Activated CD4-positive, alpha-beta T cell treated with anti-CD3 and anti-CD28 coated beads, Interleukin-2, amount 10 ng/mL, durations not matched to agents 24 days and 14 days (primary cell): ENCODE measurements at regions of chr4 and their contacts with region 1.

Region 1: DNA sequence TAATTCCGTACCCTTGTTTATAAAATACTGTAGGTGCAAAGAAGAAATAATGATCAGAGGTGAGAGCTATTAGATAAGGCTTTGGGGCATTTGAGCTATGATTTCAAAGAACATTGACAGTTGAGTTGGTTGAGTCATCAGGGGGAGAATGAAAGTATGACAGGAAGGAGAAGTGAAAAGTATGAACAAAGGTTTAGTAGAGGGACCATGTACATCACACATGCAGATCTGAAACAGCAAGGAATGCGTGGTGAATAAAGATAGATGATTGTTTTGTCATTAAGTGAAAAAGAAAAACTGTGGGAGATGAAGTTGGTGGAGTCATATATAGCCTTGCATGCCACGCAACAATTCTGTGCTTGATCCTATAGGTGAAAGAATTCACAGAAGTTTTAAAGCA is 163.1 kb downstream of the ARAP2 start:
- DNase-seq: no peak
- H3K4me3 Mint-ChIP-seq: no peak overlapping the region
- H3K27ac Mint-ChIP-seq: no peak overlapping the region
- H3K4me1 Mint-ChIP-seq: peaks cover 4% of the 10 kb centered on the region
- H3K27me3 Mint-ChIP-seq: no peaks in the 10 kb centered on the region

Region 2: GRCh38 chr4:35975617-35976355 is 105.4 kb before region 1 on chr4:
- intact Hi-C with region 1: loop called (anchors 1 kb)
- DNase-seq: no peak
- H3K4me3 Mint-ChIP-seq: no peak overlapping the region
- H3K27ac Mint-ChIP-seq: no peak overlapping the region
- H3K4me1 Mint-ChIP-seq: peaks cover 12% of the 10 kb centered on the region
- H3K27me3 Mint-ChIP-seq: no peaks in the 10 kb centered on the region

Region 3: DNA sequence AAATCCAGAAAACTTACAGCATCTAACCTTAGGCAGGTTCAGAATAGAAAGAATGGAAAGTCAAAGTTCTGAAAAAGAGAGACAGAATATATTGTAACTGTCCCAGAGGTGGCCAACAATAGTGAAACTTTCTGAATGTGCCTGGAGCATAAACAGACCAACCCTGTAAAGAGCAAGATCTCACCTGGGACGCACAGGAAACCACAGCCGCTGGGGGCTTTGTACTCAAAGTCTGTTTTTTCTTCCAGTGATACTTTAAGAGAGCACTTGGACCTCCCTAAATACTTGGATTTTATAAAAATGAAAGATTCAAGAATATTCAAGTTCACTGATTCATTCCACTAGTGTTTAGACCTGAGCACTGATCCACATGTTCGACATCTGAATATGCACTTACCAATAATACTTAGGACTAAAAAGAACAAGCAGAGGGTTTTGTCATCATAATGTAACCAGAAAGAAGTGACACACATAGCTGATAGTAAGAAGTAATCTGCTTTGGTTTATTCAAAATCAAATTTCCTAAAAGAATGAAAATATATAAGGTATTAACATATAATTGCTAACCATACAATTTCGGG is 127.8 kb after region 1 on chr4:
- intact Hi-C with region 1: loop called (anchors 2 kb)
- DNase-seq: peak; percentile 72
- H3K4me3 Mint-ChIP-seq: peak overlapping the region; percentile 57
- H3K27ac Mint-ChIP-seq: peak overlapping the region; percentile 78
- H3K4me1 Mint-ChIP-seq: peaks cover 39% of the 10 kb centered on the region
- H3K27me3 Mint-ChIP-seq: no peaks in the 10 kb centered on the region

Region 4: GRCh38 chr4:36322921-36323354 is 241.8 kb after region 1 on chr4:
- intact Hi-C with region 1: loop called (anchors 5 kb)
- DNase-seq: peak; percentile 90
- H3K4me3 Mint-ChIP-seq: peak overlapping the region; percentile 21
- H3K27ac Mint-ChIP-seq: peak overlapping the region; percentile 93
- H3K4me1 Mint-ChIP-seq: peaks cover 71% of the 10 kb centered on the region
- H3K27me3 Mint-ChIP-seq: no peaks in the 10 kb centered on the region

Region 5: GRCh38 chr4:36394352-36394903 is 313.2 kb after region 1 on chr4:
- intact Hi-C with region 1: loop called (anchors 2 kb)
- DNase-seq: peak; percentile 88
- H3K4me3 Mint-ChIP-seq: peak overlapping the region; percentile 70
- H3K27ac Mint-ChIP-seq: peak overlapping the region; percentile 97
- H3K4me1 Mint-ChIP-seq: peaks cover 23% of the 10 kb centered on the region
- H3K27me3 Mint-ChIP-seq: no peaks in the 10 kb centered on the region